ENCODE measurements at regions of chr3 and their contacts with region 1.

Region 1: DNA sequence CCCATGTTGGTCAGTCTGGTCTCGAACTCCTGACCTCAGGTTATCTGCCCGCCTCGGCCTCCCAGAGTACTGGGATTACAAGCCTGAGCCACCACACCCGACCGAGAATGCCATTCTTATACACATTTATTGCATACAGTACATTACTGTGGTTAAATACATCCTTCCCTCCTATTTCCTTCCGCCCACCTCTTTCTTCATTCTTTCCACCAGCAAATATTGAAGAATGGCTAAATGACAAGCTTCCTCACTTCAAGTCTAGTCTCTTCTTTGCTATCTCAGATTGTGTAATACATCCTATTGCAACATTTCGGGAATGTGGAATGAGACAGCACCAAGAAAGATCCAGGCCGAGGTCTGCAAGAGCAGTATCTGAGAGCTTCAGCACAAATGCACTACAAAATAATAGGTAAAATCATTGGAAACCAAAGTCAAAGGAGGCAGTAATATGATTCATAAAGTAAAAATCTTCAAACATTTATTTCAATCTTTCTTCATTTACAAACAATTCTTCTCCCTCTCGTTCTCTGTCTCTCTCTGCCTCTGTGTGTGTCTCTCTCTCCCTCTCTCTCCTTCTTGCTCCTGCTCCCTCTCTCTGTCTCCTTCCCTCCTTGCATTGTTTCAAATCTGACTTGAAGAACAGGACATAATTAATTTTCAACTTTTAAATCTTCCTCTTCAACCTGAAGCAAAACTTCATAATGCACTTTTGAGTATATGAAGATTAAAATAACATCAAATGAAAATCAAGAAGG is 94.7 kb upstream of the TGFBR2 start:
- DNase-seq: peak; percentile 62
- H3K4me3 ChIP-seq: no peak overlapping the region
- CTCF ChIP-seq: no peak

Region 2: GRCh38 chr3:30426293-30426993 is 85.3 kb before region 1 on chr3:
- in situ Hi-C with region 1: no loop called
- DNase-seq: peak; percentile 53
- H3K4me3 ChIP-seq: no peak overlapping the region
- CTCF ChIP-seq: no peak

Region 3: DNA sequence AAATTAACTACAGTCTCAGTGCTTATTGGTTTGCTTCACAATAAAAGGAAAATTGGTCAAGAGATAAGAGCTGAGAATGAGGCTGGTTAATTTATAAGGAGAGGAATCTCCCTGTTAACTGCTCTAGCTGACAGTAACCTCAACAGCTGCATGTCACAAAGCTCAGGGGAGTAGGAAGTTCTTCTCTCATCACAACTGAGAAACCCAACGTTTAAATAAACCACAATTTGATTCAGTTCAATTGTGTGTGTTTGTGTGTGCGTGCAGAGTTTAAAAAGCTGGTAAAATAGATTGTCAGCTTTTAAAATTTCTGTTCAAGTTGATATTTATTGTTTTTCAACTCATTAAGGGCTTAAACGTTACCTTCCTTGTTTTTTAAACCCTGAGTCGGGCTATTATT is 91.2 kb after region 1 on chr3:
- in situ Hi-C with region 1: loop called (anchors 5 kb)
- DNase-seq: no peak
- H3K4me3 ChIP-seq: no peak overlapping the region
- CTCF ChIP-seq: no peak